Spleen (tissue), 13 donors: ENCODE measurements at regions of chr11 and their contacts with region 1.

Region 1: DNA sequence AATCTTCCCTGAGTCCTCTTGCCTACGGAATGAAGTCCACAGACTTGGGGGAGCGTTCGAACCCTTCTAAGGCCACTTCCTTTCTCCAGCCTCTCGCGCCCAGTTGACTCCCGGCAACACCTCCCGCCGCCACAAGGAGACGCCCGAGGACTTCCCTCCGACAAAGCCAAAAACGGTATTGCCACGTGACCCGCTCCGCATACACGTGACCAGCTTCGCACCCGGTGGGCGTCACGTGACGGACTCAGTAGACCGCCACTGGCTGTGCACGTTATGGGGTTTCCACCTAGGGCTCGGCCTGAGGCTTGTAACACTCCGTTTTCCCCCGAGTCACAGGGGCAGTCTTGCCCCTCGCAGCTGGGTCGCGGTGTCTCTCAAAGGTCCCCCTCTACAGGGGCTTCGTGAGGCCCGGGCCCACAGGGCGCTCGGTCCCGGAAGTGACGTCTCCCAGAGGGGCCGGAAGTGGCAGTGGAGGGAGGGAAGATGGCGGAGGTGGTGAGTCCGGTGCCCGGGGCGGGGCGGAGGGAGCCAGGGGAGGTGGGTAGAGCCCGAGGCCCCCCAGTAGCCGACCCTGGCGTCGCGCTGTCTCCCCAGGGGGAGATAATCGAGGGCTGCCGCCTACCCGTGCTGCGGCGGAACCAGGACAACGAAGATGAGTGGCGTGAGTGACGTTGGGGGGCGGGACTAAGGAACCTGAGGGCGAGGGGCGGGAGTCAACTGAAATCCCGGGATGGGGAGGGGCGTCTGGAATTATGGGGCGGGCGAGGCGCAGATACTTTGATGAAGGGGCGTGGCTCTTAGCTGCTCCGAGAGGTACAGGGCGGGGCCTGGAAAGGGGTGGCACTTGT is at the start of gene KAT5:
- DNase-seq: peak; percentile 99
- H3K4me3 ChIP-seq: peak within 1 kb of the TSS; percentile 35 to 76 (median 66)
- H3K27ac ChIP-seq: peak within 1 kb of the TSS; percentile 89 to 100 (median 100)
- H3K4me1 ChIP-seq: peaks cover 9 to 57% (median 27%) of the 10 kb centered on the region in 6 donors
- H3K27me3 ChIP-seq: no peaks in the 10 kb centered on the region
- CTCF ChIP-seq: peak; percentile 95 to 100 (median 97)
- POLR2A ChIP-seq: peak in 2 of 3 donors; percentile 55 to 58
- total RNA-seq, gene KAT5: 55.0 to 85.8 (median 63.6) TPM

Region 2: DNA sequence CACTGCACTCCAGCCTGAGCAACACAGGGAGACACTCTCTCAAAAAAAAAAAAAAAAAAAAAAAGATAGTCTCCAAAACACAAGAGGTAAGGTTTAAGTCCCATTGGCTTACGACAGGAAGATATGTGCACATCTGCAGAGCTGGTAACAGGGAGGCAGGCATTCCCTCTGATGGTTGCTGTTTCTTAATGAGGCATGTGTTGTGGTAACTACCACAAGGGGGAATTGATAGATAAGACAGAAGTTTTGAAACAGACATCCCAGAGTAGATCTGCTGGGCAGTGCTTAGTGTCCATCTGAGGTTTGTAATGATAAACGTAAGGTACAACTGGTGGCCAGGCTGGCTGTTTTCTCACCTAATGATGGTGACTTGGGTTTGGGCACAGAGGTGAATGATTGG is 285.3 kb after region 1 on chr11:
- intact Hi-C with region 1: loop called (anchors 10 kb)
- DNase-seq: no peak
- H3K4me3 ChIP-seq: no peak overlapping the region
- H3K27ac ChIP-seq: no peak overlapping the region
- H3K4me1 ChIP-seq: peaks cover 4 to 31% (median 20%) of the 10 kb centered on the region in 6 donors
- H3K27me3 ChIP-seq: no peaks in the 10 kb centered on the region
- CTCF ChIP-seq: no peak
- POLR2A ChIP-seq: no peak